ENCODE measurements at regions of chr9 and their contacts with region 1.

Region 1: DNA sequence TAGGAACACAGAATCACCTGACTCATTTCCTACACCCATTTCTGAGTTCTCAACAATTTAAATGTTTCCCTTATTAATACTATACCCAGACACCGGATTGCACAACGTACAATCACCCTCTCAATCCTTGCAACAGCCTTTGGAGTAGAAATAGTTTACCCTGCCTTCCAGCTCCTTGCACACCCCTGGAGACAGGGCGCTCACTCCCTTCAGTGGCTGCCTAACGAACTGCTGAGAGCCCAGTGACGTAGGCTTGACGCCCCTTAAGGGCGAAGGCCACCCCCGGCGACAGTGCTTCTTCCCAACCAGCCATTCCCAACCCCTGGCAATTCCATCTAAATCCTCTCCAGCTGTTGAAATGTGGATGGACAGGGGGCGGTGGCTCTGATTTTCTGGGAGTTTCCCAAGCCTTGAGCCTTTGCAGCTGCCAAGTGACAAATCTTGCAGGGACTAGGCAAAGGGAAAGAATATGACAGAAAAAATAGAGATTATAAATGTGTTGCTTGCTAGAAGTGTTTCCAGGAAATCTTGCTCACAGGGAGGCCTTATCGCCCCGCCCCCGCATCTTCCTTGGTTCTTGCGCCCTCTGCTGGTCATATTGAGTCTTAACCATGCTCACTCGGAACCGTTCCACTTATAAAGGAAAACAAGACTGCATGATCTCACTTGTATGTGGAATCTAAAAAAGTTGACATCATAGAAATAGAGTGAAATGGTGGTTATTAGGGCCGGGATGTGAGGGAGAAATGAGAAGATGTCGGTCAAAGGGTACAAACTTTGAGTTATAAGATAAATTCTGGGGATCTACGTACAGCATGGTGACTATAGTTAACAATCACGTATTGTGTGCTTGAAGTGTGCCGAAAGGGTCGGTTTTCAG is 7.6 kb upstream of the BARX1 start:
- DNase-seq: peak; percentile 22
- H3K4me3 ChIP-seq: no peak overlapping the region
- H3K27ac ChIP-seq: no peak overlapping the region
- H3K4me1 ChIP-seq: peaks cover 13 to 37% (median 25%) of the 10 kb centered on the region in 3 donors
- H3K27me3 ChIP-seq: peaks cover 11 to 78% (median 32%) of the 10 kb centered on the region in 4 donors
- CTCF ChIP-seq: peak; percentile 64 to 91 (median 86)
- POLR2A ChIP-seq: no peak

Region 2: GRCh38 chr9:93682232-93682968 is 280.4 kb before region 1 on chr9:
- intact Hi-C with region 1: loop called (anchors 5 kb)
- DNase-seq: no peak
- H3K4me3 ChIP-seq: no peak overlapping the region
- H3K27ac ChIP-seq: no peak overlapping the region
- H3K4me1 ChIP-seq: no peaks in the 10 kb centered on the region
- H3K27me3 ChIP-seq: peaks cover 0 to 38% (median 0%) of the 10 kb centered on the region in 4 donors
- CTCF ChIP-seq: peak in 5 of 6 experiments; percentile 72 to 84 (median 73)
- POLR2A ChIP-seq: no peak

Measured in esophagus squamous epithelium (tissue), 5 donors.